Dendritic cell treated with granulocyte-macrophage colony-stimulating factor and Interleukin-4, amounts not matched to agents 40 ng/mL and 50 ng/mL, for 4 days (primary cell): ENCODE measurements at regions of chr17 and their contacts with region 1.

Region 1: GRCh38 chr17:61412143-61412859 is 12.7 kb downstream of the TBX2 start:
- H3K4me3 Mint-ChIP-seq: peak overlapping the region; percentile 75
- H3K27ac Mint-ChIP-seq: peak overlapping the region; percentile 17
- H3K4me1 Mint-ChIP-seq: peaks cover 43% of the 10 kb centered on the region
- H3K27me3 Mint-ChIP-seq: peaks cover 89% of the 10 kb centered on the region

Region 2: GRCh38 chr17:61179380-61179806 is 232.9 kb before region 1 on chr17:
- intact Hi-C with region 1: no loop called
- H3K4me3 Mint-ChIP-seq: no peak overlapping the region
- H3K27ac Mint-ChIP-seq: no peak overlapping the region
- H3K4me1 Mint-ChIP-seq: no peaks in the 10 kb centered on the region
- H3K27me3 Mint-ChIP-seq: no peaks in the 10 kb centered on the region

Region 3: DNA sequence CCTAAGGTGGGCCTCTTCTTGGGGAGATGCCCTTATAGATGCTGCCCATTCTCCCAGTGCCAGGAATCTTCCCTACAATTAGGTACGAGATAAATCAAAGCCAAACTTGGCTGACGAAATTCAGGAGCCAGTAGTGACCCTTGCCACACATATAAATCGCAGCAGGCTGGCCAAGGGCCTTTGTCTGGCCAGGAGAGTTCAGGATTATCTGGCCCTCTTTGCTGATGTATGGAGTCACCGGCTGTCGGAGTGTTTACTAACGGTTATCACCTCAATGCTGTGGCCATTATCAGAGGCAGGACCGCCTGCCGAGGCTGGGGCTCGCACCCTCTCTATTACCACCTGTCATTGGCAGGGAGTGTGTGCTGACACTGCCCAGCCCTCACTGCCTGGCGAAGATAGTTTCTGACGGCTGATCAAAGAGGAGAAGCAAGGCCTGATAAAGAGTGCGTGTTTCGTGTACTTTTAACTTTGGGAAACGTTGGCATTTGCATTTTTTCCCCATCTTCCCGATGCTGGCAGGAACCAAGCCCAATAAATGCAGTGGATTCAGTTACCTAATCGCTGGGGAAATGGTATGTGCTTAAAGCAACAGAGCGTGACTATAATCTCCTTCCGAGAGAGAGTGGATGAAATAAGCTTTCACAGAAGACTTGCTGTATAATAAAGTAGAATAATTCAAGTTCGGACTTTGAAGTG is 45.4 kb before region 1 on chr17:
- intact Hi-C with region 1: no loop called
- H3K4me3 Mint-ChIP-seq: no peak overlapping the region
- H3K27ac Mint-ChIP-seq: no peak overlapping the region
- H3K4me1 Mint-ChIP-seq: no peaks in the 10 kb centered on the region
- H3K27me3 Mint-ChIP-seq: no peaks in the 10 kb centered on the region

Region 4: DNA sequence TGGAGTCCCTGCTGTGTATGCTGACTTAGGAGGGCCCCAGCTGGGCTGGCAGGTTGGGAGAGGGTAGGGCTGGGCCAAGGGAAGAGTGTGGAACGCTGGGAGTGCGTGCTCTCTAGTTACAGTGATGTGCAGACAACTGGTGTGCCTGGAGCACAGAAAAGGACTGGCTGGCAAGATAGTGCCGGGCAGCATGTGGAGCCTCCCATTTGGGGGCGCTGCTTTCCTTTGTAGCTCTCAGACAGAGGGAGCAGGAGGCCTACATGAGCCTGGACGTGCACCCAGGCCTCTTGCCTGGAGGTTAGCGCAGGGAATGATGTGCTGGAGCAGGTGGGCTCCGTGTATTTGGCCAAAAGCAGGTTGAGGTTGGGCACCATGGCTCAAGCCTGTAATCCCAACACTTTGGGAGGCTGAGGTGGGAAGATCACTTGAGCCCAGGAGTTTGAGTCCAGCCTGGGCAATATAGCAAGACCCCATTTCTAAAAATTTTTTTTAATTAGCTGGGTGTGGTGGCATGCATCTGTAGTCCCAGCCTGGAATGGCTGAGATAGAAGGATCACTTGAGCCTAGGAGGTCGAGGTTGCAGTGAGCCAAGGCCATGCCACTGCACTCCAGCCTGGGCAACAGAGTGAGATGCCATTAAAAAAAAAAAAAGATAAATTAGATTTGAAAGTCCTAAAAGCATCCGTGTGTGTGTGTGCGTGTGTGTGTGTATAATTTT is 13.9 kb after region 1 on chr17:
- intact Hi-C with region 1: no loop called
- H3K4me3 Mint-ChIP-seq: no peak overlapping the region
- H3K27ac Mint-ChIP-seq: no peak overlapping the region
- H3K4me1 Mint-ChIP-seq: no peaks in the 10 kb centered on the region
- H3K27me3 Mint-ChIP-seq: peaks cover 50% of the 10 kb centered on the region

Region 5: DNA sequence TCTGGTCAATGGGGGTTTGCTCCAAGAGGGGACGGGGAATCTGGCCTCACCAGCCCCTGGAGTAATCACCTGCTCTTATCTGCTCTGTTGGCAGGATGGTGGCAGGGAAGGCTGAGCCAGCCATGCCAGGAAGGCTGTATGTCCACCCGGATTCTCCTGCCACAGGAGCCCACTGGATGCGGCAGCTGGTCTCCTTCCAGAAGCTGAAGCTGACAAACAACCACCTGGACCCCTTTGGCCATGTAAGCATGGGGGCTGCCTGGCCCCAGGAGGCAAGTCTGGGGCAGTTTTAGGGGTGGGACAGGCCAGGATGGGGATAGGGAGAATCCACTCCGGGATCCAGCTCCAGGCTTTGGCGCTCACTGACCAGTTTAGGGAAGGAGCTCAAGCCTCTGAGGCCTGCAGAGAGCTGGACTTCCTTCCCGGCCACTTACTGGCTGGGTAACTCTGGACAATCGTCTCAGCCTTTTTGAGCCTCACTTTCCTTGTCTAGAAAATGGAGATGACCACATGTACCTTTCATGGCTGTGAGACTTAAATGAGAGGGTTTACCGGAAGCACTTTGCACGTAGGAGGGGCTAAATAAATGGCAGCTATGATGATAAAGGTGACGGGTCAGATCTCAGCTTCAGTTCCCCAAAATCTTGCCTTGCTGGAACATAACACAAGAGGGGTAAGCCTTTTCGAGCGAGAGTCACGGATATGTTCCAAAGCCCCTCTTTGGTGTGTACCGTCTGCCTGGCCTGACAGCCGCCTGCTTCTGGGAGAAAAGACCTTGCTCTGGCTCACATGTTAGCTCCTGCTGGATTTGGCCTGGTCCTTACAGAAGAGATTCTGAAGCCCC is 55.3 kb after region 1 on chr17:
- intact Hi-C with region 1: loop called (anchors 2 kb)
- H3K4me3 Mint-ChIP-seq: no peak overlapping the region
- H3K27ac Mint-ChIP-seq: peak overlapping the region; percentile 15
- H3K4me1 Mint-ChIP-seq: peaks cover 19% of the 10 kb centered on the region
- H3K27me3 Mint-ChIP-seq: peaks cover 45% of the 10 kb centered on the region

Region 6: GRCh38 chr17:61551255-61551742 is 139.0 kb after region 1 on chr17:
- intact Hi-C with region 1: loop called (anchors 1 kb)
- H3K4me3 Mint-ChIP-seq: no peak overlapping the region
- H3K27ac Mint-ChIP-seq: no peak overlapping the region
- H3K4me1 Mint-ChIP-seq: no peaks in the 10 kb centered on the region
- H3K27me3 Mint-ChIP-seq: peaks cover 29% of the 10 kb centered on the region

Region 7: GRCh38 chr17:61619493-61619892 is 207.2 kb after region 1 on chr17:
- intact Hi-C with region 1: no loop called
- H3K4me3 Mint-ChIP-seq: no peak overlapping the region
- H3K27ac Mint-ChIP-seq: no peak overlapping the region
- H3K4me1 Mint-ChIP-seq: no peaks in the 10 kb centered on the region
- H3K27me3 Mint-ChIP-seq: peaks cover 1% of the 10 kb centered on the region

Region 8: DNA sequence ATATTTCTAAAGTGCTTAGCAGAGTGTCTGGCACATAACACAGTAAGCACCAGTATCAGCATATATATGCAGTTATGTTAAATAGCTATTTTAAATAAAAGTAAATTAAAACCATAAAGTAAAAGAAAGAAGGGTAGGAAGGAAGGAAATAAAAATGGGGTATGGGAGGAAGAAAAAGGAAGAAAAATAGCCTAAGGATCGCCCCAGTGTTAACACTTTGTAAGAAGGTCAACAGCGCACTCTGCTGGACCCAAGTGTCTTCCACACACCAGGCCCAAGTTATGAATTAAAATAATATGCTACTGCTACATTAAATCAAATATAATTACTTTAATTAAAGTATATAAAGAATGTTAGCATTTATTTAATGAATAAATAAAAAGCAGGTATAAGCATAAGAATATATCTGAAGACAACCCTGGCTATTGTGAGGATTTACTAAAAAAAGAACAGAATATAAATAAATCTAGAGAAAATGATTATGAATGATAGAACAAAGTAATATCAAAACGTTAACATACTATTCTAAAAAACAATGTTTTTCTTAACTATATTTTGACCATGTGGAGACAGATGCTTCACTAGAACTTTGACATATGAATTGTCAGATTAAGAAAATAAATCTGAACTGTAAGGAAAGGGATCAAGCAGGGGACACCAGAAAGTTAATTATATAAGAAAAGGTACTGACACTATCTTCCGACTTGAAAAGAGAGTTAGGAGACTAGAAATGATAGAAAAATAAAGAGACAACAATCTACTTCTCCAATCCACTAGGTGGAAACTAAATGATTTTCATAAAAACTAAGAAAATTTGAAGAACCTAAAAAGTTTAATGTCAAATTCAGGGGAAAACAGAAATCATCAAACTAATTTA is 425.1 kb after region 1 on chr17:
- intact Hi-C with region 1: loop called (anchors 1 kb)
- H3K4me3 Mint-ChIP-seq: no peak overlapping the region
- H3K27ac Mint-ChIP-seq: no peak overlapping the region
- H3K4me1 Mint-ChIP-seq: no peaks in the 10 kb centered on the region
- H3K27me3 Mint-ChIP-seq: no peaks in the 10 kb centered on the region